ENCODE measurements at regions of chr10 and their contacts with region 1.

Region 1: DNA sequence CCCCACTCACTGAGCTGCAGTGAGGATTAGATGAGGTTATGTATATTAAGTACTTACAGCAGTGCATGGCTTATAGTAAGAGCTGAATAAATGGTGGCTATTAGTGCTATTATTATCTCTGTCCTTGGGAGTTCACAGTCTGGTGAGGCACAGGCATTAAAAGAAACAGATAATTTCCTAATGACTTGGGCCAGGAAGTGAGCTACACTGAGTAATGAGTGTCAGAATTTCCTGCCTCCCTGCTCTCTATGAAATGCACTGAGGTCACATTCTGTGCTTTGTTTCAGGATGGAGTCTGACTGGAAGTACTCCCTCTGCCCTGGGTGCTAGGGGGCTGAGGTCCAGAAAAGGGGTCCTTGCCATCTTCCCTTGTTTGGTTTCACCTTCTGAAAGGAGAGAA is 48.7 kb upstream of the LOXL4 start:
- DNase-seq: no peak
- H3K4me3 ChIP-seq: no peak overlapping the region
- H3K27ac ChIP-seq: no peak overlapping the region
- H3K4me1 ChIP-seq: peaks cover 0 to 3% (median 0%) of the 10 kb centered on the region in 4 experiments; a peak in 3 of 7 replicates
- H3K27me3 ChIP-seq: no peaks in the 10 kb centered on the region
- CTCF ChIP-seq: no peak
- EP300 ChIP-seq: no peak
- POLR2A ChIP-seq: no peak
- RAD21 ChIP-seq: no peak

Region 2: GRCh38 chr10:98006266-98006665 is 310.4 kb before region 1 on chr10:
- CTCF ChIA-PET with region 1: no interaction called
- POLR2A ChIA-PET with region 1: no interaction called
- DNase-seq: no peak
- H3K4me3 ChIP-seq: peak overlapping the region; percentile 13 to 50 (median 28); a peak in 7 of 8 replicates
- H3K27ac ChIP-seq: no peak overlapping the region
- H3K4me1 ChIP-seq: peaks cover 0 to 18% (median 3%) of the 10 kb centered on the region in 4 experiments; a peak in 4 of 7 replicates
- H3K27me3 ChIP-seq: no peaks in the 10 kb centered on the region; a peak in 2 of 7 replicates
- CTCF ChIP-seq: no peak
- EP300 ChIP-seq: no peak
- POLR2A ChIP-seq: no peak
- RAD21 ChIP-seq: no peak; a peak in 1 of 4 replicates

Region 3: DNA sequence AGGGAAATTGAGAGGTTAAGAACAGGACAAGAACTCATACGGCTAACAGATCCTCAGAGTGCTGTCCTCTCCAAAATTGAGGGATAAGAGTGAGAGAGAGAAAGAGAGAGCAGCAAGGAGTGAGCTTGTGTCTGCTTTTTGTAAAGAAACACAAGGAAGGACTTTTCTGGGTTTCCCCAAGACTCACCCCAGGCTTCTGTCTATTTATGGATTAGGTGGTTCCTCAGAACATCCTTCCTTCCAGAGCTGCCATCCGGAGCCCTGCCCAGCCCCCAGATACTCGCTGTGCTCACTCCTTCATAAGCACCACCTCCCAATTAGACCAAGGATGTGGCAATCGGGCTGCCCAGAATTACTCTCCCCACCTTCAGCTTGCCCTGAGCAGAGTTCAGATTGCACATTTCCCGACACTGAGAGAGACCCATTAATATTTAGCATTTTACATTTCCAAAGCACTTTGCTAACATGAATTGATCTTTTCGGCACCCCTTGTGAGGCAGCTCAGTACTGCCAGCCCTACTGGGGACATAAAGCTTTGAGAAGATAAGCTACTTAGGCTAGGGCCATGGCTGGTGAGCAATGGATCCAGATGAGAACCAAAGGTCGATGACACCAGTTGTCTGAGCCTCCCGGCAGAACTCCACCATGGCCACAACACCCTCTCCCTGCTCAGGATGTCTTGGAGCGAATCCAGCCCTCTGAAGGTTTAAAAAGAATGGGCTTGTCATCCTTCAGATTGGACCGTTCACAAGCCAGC is 201.5 kb before region 1 on chr10:
- CTCF ChIA-PET with region 1: no interaction called
- POLR2A ChIA-PET with region 1: no interaction called
- DNase-seq: no peak
- H3K4me3 ChIP-seq: no peak overlapping the region
- H3K27ac ChIP-seq: no peak overlapping the region
- H3K4me1 ChIP-seq: no peaks in the 10 kb centered on the region
- H3K27me3 ChIP-seq: no peaks in the 10 kb centered on the region
- CTCF ChIP-seq: no peak
- EP300 ChIP-seq: no peak
- POLR2A ChIP-seq: no peak
- RAD21 ChIP-seq: no peak

Region 4: GRCh38 chr10:98186681-98187080 is 130.0 kb before region 1 on chr10:
- CTCF ChIA-PET with region 1: no interaction called
- POLR2A ChIA-PET with region 1: no interaction called
- DNase-seq: no peak
- H3K4me3 ChIP-seq: no peak overlapping the region
- H3K27ac ChIP-seq: no peak overlapping the region
- H3K4me1 ChIP-seq: no peaks in the 10 kb centered on the region
- H3K27me3 ChIP-seq: no peaks in the 10 kb centered on the region
- CTCF ChIP-seq: no peak
- EP300 ChIP-seq: no peak
- POLR2A ChIP-seq: no peak
- RAD21 ChIP-seq: no peak

Region 5: GRCh38 chr10:98302741-98303365 is 13.8 kb before region 1 on chr10:
- CTCF ChIA-PET with region 1: interaction called, 20 read pairs
- POLR2A ChIA-PET with region 1: no interaction called
- DNase-seq: no peak
- H3K4me3 ChIP-seq: no peak overlapping the region
- H3K27ac ChIP-seq: no peak overlapping the region
- H3K4me1 ChIP-seq: peaks cover 0 to 5% (median 1%) of the 10 kb centered on the region in 4 experiments; a peak in 3 of 7 replicates
- H3K27me3 ChIP-seq: no peaks in the 10 kb centered on the region
- CTCF ChIP-seq: no peak
- EP300 ChIP-seq: no peak
- POLR2A ChIP-seq: no peak
- RAD21 ChIP-seq: no peak